Thyroid gland (tissue), 4 donors: ENCODE measurements at regions of chr15 and their contacts with region 1.

Region 1: GRCh38 chr15:31391687-31392671 is 65.3 kb downstream of the KLF13 start:
- DNase-seq: peak; percentile 91
- H3K4me3 ChIP-seq: peak overlapping the region; percentile 70 to 89 (median 75)
- H3K27ac ChIP-seq: peak overlapping the region; percentile 97 to 98 (median 97)
- H3K4me1 ChIP-seq: peaks cover 22 to 28% of the 10 kb centered on the region in 2 donors
- H3K27me3 ChIP-seq: no peaks in the 10 kb centered on the region
- CTCF ChIP-seq: no peak
- POLR2A ChIP-seq: peak; percentile 18 to 93

Region 2: GRCh38 chr15:31332020-31332680 is 59.8 kb before region 1 on chr15:
- intact Hi-C with region 1: loop called (anchors 5 kb)
- DNase-seq: peak; percentile 59
- H3K4me3 ChIP-seq: no peak overlapping the region
- H3K27ac ChIP-seq: peak overlapping the region; percentile 95 to 100 (median 100)
- H3K4me1 ChIP-seq: peaks cover 76 to 80% of the 10 kb centered on the region in 2 donors
- H3K27me3 ChIP-seq: no peaks in the 10 kb centered on the region
- CTCF ChIP-seq: no peak
- POLR2A ChIP-seq: no peak